ENCODE measurements at regions of chr11 and their contacts with region 1.

Region 1: GRCh38 chr11:66045177-66045639 is 3.8 kb downstream of the GAL3ST3 start:
- DNase-seq: peak; percentile 87 to 97 (median 95)
- ATAC-seq: peak; percentile 98
- H3K4me3 ChIP-seq: no peak overlapping the region
- H3K27ac ChIP-seq: no peak overlapping the region
- H3K4me1 ChIP-seq: peaks cover 0 to 8% of the 10 kb centered on the region in 2 experiments; a peak in 3 of 5 replicates
- H3K27me3 ChIP-seq: no peaks in the 10 kb centered on the region; a peak in 1 of 5 replicates
- CTCF ChIP-seq: peak; percentile 91 to 94 (median 93)
- EP300 ChIP-seq: no peak
- POLR2A ChIP-seq: no peak
- RAD21 ChIP-seq: peak; percentile 46 to 62

Region 2: GRCh38 chr11:66061234-66061633 is 16.0 kb after region 1 on chr11:
- CTCF ChIA-PET with region 1: no interaction called
- POLR2A ChIA-PET with region 1: interaction called, 10 read pairs
- in situ Hi-C with region 1: no loop called
- intact Hi-C with region 1: no loop called
- DNase-seq: no peak
- ATAC-seq: no peak
- H3K4me3 ChIP-seq: no peak overlapping the region
- H3K27ac ChIP-seq: no peak overlapping the region
- H3K4me1 ChIP-seq: no peaks in the 10 kb centered on the region
- H3K27me3 ChIP-seq: no peaks in the 10 kb centered on the region
- CTCF ChIP-seq: no peak
- EP300 ChIP-seq: no peak
- POLR2A ChIP-seq: no peak
- RAD21 ChIP-seq: no peak

Region 3: GRCh38 chr11:66081505-66081904 is 36.3 kb after region 1 on chr11:
- CTCF ChIA-PET with region 1: no interaction called
- POLR2A ChIA-PET with region 1: interaction called, 3 read pairs
- in situ Hi-C with region 1: no loop called
- intact Hi-C with region 1: loop called (anchors 1 kb)
- DNase-seq: peak in 2 of 4 experiments; percentile 51
- ATAC-seq: peak; percentile 59
- H3K4me3 ChIP-seq: no peak overlapping the region
- H3K27ac ChIP-seq: peak overlapping the region; percentile 59; the same call in 2 of the 3 replicates
- H3K4me1 ChIP-seq: peaks cover 13 to 46% of the 10 kb centered on the region in 2 experiments
- H3K27me3 ChIP-seq: no peaks in the 10 kb centered on the region
- CTCF ChIP-seq: no peak
- EP300 ChIP-seq: no peak
- POLR2A ChIP-seq: no peak
- RAD21 ChIP-seq: no peak

Region 4: GRCh38 chr11:66112601-66113098 is 67.4 kb after region 1 on chr11:
- CTCF ChIA-PET with region 1: no interaction called
- POLR2A ChIA-PET with region 1: no interaction called
- in situ Hi-C with region 1: no loop called
- intact Hi-C with region 1: no loop called
- DNase-seq: no peak
- ATAC-seq: peak; percentile 44; the same call in 2 of the 3 replicates
- H3K4me3 ChIP-seq: no peak overlapping the region
- H3K27ac ChIP-seq: no peak overlapping the region
- H3K4me1 ChIP-seq: peaks cover 9 to 18% of the 10 kb centered on the region in 2 experiments; a peak in 4 of 5 replicates
- H3K27me3 ChIP-seq: no peaks in the 10 kb centered on the region
- CTCF ChIP-seq: no peak
- EP300 ChIP-seq: no peak
- POLR2A ChIP-seq: no peak
- RAD21 ChIP-seq: no peak